Activated CD4-positive, alpha-beta T cell treated with anti-CD3 and anti-CD28 coated beads, Interleukin-2, amount 10 ng/mL, durations not matched to agents 24 days and 14 days (primary cell): ENCODE measurements at regions of chr10 and their contacts with region 1.

Region 1: GRCh38 chr10:70233109-70233938 is at the start of gene PPA1:
- DNase-seq: peak; percentile 100
- H3K4me3 Mint-ChIP-seq: peak within 1 kb of the TSS; percentile 84
- H3K27ac Mint-ChIP-seq: peak within 1 kb of the TSS; percentile 96
- H3K4me1 Mint-ChIP-seq: peaks cover 29% of the 10 kb centered on the region
- H3K27me3 Mint-ChIP-seq: no peaks in the 10 kb centered on the region
- total RNA-seq, gene PPA1: 413 and 424 TPM in 2 replicates

Region 2: DNA sequence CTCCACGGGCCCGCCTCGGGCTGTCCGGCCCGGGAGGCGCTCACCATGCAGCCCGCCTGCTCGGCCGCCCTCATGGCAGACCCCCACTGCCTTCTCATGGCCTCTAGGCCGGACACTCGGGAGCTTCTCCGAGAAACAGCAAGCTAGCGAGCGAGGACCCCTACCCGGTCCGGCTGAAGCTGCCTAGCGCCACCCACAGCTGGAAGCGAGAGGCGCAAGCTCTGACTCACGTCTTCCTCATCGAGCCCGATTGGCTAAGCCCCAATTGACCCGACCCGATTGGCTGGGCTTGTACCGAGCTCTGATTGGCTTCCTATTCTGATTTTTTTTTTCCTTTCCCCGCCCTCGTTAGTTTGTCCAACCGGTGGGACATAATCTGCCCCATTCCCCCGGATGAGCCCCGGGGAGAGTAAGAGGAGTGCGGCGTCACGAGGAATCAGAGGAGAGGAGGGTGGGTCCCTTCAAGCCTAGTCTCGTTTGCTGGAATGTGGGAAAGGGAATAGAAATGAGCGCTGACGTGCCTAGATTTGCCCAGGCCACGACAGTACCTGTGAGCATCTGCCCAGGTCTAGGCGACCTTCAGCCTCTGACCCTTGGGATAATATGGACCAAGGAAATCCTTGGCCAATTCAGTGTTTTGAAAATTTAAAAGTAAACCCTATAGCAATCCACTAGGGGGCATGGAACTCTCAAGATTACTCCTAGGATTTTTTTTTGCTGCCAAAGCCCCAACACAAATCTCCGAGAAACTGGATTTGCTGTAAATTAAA is 86.7 kb before region 1 on chr10 and contains the start of gene TYSND1:
- intact Hi-C with region 1: loop called (anchors 1 kb)
- DNase-seq: peak; percentile 98
- H3K4me3 Mint-ChIP-seq: peak within 1 kb of the TSS; percentile 94
- H3K27ac Mint-ChIP-seq: peak within 1 kb of the TSS; percentile 97
- H3K4me1 Mint-ChIP-seq: peaks cover 16% of the 10 kb centered on the region
- H3K27me3 Mint-ChIP-seq: peaks cover 2% of the 10 kb centered on the region
- total RNA-seq, gene TYSND1: 14.9 and 15.3 TPM in 2 replicates

Region 3: DNA sequence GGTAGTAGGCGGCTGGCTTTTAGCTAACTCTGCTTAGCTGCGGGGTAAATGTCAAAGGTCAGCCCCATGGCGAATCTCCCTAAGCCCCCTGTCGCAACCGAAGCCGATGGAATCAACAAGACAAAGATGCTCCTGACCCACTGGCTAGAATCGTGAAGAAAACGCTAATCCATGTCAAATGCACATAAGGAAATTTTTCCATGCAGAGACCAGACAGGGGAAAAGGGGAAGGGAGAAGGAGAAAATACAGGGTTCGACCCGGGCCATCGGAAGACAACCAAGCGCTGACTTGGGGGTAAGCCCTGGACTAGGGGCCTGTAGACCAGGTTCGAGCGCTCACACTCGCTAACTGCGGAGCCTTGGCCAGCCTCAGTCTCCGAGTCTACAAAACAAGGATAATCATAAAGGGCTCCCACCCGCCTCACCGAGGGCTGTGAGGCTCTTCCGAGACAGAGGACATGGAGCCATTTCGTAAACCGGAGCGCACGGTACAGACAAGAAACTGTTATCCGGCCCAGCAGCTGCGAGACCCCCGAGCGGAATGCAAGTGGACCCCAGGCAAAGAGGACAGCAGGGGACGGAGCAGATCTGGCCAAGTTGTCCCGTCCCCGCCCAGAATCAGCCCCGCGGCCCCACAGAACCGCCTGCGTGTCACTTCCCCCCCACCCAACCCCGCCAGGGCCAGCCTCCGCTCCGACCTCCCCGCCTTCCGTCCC is 63.5 kb before region 1 on chr10:
- intact Hi-C with region 1: loop called (anchors 1 kb)
- DNase-seq: peak; percentile 70
- H3K4me3 Mint-ChIP-seq: peak overlapping the region; percentile 96
- H3K27ac Mint-ChIP-seq: peak overlapping the region; percentile 96
- H3K4me1 Mint-ChIP-seq: peaks cover 42% of the 10 kb centered on the region
- H3K27me3 Mint-ChIP-seq: no peaks in the 10 kb centered on the region

Region 4: DNA sequence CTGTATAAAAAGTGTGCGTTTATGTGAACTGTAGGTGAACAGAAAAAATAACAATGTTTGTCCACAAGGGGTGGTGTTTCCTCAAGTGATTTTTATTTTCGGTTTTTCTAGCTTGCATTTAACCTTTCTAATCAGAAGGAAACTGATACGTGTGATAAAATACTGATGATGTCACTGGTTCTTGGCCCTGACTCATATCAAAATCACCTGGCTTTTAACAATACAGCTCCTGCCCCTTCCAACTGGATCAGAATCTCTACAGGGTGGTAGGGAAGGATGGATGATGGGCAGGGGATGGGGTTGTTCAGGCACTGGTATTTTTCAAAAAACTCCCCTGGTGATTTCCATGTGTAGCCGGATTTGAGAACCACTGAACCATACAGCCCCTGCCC is 39.6 kb after region 1 on chr10:
- intact Hi-C with region 1: loop called (anchors 1 kb)
- DNase-seq: peak; percentile 66
- H3K4me3 Mint-ChIP-seq: no peak overlapping the region
- H3K27ac Mint-ChIP-seq: peak overlapping the region; percentile 45
- H3K4me1 Mint-ChIP-seq: peaks cover 21% of the 10 kb centered on the region
- H3K27me3 Mint-ChIP-seq: peaks cover under 1% of the 10 kb centered on the region

Region 5: GRCh38 chr10:70404036-70404786 is 170.9 kb after region 1 on chr10 and contains the start of gene EIF4EBP2:
- intact Hi-C with region 1: loop called (anchors 1 kb)
- DNase-seq: peak; percentile 100
- H3K4me3 Mint-ChIP-seq: peak within 1 kb of the TSS; percentile 98
- H3K27ac Mint-ChIP-seq: peak within 1 kb of the TSS; percentile 96
- H3K4me1 Mint-ChIP-seq: peaks cover 36% of the 10 kb centered on the region
- H3K27me3 Mint-ChIP-seq: peaks cover 2% of the 10 kb centered on the region
- total RNA-seq, gene EIF4EBP2: 37.6 and 38.3 TPM in 2 replicates